Head of caudate nucleus (tissue), 42 donors: ENCODE measurements at regions of chr5 and their contacts with region 1.

Region 1: DNA sequence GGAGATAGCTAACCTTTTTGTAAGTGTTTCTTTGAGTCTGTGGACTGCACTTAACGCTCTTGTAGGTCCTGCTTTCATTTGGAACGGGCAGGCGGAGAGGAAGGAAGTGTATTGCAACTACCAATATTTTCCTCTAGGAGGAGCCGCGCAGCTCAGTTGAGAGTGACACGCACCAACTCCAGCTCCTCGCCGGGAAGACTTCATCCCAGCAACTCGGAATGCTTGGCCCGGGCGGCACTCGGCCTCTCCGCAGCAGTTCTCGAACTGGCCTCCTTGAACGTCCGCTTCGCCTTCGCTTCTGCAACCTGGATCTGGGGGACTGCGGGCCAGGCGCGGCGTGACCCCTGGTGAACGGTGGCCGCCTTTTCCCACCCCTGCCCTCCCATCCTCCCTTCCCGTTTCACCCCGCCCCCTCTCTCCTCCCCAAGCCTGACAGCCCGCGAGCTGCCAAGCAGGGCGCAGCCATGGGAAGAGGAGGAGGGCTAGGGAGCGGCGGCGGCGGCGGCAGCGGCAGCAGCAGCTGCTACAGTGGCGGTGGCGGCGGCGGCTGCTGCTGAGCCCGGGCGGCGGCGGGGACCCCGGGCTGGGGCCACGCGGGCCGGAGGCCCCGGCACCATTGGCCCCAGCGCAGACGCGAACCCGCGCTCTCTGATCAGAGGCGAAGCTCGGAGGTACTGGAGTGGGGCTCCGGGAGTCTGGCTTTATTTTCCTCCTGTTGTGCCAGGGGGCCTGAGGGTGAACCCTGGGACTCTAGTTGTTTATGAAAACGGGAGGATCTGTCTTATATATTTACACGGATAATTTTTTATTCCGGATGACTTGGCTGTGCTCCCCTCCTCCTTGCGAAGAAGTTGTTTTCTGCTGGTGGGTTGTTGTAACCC is at the start of gene GHR:
- DNase-seq: peak; percentile 66 to 95 (median 82)

Region 2: DNA sequence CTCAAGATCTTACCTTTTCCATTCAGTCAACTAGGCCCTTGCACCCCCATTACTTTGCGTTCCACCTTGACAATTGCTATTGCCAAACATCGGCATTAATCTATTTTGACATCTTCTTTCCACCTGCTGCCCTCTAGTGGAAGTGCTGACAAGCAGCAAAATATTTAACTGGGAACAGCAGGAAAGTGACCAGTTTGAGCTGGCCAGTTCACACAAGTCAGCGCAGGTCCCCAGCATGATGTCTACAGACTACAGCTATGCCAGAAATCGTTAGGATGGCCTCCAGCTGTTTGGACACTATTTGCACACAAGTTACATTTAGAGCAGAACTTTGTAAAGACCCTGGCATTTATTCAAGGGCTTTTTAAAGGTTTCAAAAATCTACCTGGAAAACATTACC is 159.8 kb after region 1 on chr5:
- intact Hi-C with region 1: loop called (anchors 10 kb)
- DNase-seq: peak in 32 of 42 donors; percentile 5 to 80 (median 52)

Region 3: DNA sequence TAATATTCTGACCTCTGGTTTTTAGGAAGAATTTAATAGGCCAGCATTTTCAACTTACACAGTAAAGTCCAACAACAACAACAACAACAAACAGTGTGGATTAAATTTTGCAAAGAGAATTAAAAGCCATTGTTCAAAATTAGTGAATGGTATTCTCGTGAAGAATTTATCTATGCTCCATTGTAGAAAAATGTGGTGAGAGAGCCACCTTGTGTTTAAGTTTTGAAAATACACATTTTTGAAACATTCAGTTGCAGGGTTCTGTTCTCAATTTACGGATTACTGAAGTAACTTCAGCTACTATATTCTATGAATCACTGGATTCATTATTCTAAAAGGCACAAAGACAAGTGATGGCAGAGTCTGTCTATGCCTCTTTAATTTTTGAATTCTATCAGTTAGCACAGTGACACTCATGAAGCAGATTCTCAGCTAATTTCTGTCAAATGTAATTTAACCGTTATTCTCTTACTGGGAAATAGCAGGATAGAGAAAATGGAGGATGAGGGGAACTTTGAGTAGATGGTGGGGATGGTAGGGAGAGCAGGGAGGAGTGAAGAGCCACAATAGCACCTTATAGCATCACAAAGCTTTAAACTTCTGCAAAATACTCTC is 344.1 kb after region 1 on chr5:
- intact Hi-C with region 1: loop called (anchors 10 kb)
- DNase-seq: peak in 1 of 42 donors; percentile 37

Region 4: DNA sequence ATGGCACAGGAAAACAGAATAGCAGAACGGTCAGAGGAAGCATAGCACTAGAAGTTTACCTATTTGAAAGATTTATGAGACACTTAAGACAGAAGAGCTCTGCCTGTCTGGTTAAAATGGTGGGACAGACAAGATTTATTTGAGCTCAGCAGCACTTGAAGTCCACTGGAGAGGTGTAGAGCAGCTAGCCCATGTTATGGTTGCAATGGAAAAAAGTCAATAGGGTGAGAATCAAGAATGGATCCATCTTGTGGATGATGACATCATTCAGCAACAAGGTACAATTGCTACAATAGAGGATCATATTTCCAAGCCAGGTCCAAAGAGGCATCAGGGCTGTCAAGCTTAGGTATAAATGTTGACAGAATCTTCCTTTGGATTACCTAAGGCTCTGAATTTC is 676.1 kb after region 1 on chr5:
- intact Hi-C with region 1: no loop called
- DNase-seq: no peak